ENCODE measurements at regions of chr1 and their contacts with region 1.

Region 1: DNA sequence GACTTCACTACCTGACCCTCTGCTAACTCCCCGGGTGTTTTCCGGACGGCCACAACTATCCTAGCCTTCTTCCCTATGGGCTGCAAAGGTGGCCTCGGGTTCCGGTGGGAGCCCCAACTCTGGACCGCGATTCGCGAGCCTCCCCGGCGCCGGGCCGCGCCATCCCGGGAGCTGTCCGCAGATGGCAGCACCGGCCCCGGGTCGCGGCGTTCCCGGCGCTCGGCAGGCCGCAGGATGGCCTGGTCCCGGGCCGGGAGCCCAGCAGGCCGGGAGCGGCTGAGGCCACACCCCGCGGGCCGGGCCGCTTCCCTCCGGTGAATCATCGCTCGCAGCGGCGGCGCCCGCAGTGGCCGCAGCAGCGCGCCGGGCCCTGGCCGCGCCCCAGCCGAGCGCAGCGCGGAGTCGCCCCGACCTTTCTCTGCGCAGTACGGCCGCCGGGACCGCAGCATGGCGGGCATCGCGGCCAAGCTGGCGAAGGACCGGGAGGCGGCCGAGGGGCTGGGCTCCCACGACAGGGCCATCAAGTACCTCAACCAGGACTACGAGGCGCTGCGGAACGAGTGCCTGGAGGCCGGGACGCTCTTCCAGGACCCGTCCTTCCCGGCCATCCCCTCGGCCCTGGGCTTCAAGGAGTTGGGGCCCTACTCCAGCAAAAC is at the start of gene CAPN2:
- DNase-seq: peak; percentile 42 to 87 (median 66)
- H3K4me3 ChIP-seq: peak within 1 kb of the TSS; percentile 66 to 92 (median 80)
- H3K27ac ChIP-seq: peak within 1 kb of the TSS in 58 of 59 donors; percentile 73 to 96 (median 91)
- H3K27me3 ChIP-seq: no peaks in the 10 kb centered on the region
- CTCF ChIP-seq: peak; percentile 25 to 87 (median 69)
- total RNA-seq, gene CAPN2: 66.7 to 318 (median 103) TPM

Region 2: DNA sequence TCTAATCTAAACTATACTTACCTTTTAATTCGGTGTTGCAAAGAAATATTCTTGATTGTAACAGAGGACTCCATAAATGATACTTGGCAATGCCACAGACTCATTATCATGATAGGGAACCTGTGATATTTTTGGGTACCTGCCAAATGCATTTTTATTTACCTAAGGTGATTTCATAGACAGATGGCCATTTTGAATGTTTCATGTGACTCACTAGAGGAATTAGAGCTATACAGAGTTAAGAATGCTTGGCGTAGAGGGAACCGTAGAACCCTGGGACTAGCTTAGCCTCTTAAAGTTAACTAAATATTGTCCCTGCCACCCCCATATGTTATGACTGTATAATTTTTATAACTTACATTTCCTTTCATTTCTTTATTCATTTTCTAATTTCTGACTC is 761.4 kb before region 1 on chr1:
- intact Hi-C with region 1: no loop called
- DNase-seq: no peak
- H3K4me3 ChIP-seq: no peak overlapping the region
- H3K27ac ChIP-seq: no peak overlapping the region
- H3K27me3 ChIP-seq: no peaks in the 10 kb centered on the region
- CTCF ChIP-seq: no peak

Region 3: GRCh38 chr1:223748773-223749733 is 36.7 kb after region 1 on chr1:
- intact Hi-C with region 1: loop called (anchors 1 to 2 kb)
- DNase-seq: peak in 9 of 10 donors; percentile 48 to 83 (median 62)
- H3K4me3 ChIP-seq: peak overlapping the region; percentile 33 to 73 (median 60)
- H3K27ac ChIP-seq: peak overlapping the region in 56 of 59 donors; percentile 22 to 87 (median 74)
- H3K27me3 ChIP-seq: no peaks in the 10 kb centered on the region
- CTCF ChIP-seq: peak; percentile 90 to 100 (median 98)

Region 4: GRCh38 chr1:223802602-223803001 is 90.3 kb after region 1 on chr1:
- intact Hi-C with region 1: loop called in 1 of 2 experiments (anchors 5 kb)
- DNase-seq: peak in 1 of 10 donors; percentile 34
- H3K4me3 ChIP-seq: peak overlapping the region; percentile 11 to 73 (median 48)
- H3K27ac ChIP-seq: peak overlapping the region; percentile 13 to 95 (median 89)
- H3K27me3 ChIP-seq: no peaks in the 10 kb centered on the region
- CTCF ChIP-seq: peak in 44 of 56 donors; percentile 10 to 67 (median 33)

Measured in dorsolateral prefrontal cortex (tissue), 120 donors.